ENCODE measurements at regions of chr11 and their contacts with region 1.

Region 1: GRCh38 chr11:64643256-64643881 is 52.3 kb downstream of the SLC22A12 start:
- DNase-seq: peak; percentile 61
- H3K4me3 ChIP-seq: peak overlapping the region; percentile 45
- H3K27ac ChIP-seq: no peak overlapping the region
- H3K4me1 ChIP-seq: peaks cover 11% of the 10 kb centered on the region
- H3K27me3 ChIP-seq: peaks cover 64% of the 10 kb centered on the region
- CTCF ChIP-seq: no peak

Region 2: GRCh38 chr11:64378335-64378880 is 265.0 kb before region 1 on chr11:
- CTCF ChIA-PET with region 1: no interaction called
- POLR2A ChIA-PET with region 1: no interaction called
- intact Hi-C with region 1: no loop called
- DNase-seq: no peak
- H3K4me3 ChIP-seq: no peak overlapping the region
- H3K27ac ChIP-seq: no peak overlapping the region
- H3K4me1 ChIP-seq: no peaks in the 10 kb centered on the region
- H3K27me3 ChIP-seq: no peaks in the 10 kb centered on the region
- CTCF ChIP-seq: no peak

Region 3: GRCh38 chr11:64778508-64779346 is 135.4 kb after region 1 on chr11 and contains the start of gene SF1:
- CTCF ChIA-PET with region 1: interaction called, 10 read pairs
- POLR2A ChIA-PET with region 1: no interaction called
- intact Hi-C with region 1: no loop called
- DNase-seq: peak; percentile 100
- H3K4me3 ChIP-seq: peak within 1 kb of the TSS; percentile 80
- H3K27ac ChIP-seq: peak within 1 kb of the TSS; percentile 99
- H3K4me1 ChIP-seq: peaks cover 21% of the 10 kb centered on the region
- H3K27me3 ChIP-seq: no peaks in the 10 kb centered on the region
- CTCF ChIP-seq: 0 out of 2 replicates have a peak, but pooled peaks have one; percentile 10
- total RNA-seq, gene SF1: 467 and 472 TPM in 2 replicates

Region 4: DNA sequence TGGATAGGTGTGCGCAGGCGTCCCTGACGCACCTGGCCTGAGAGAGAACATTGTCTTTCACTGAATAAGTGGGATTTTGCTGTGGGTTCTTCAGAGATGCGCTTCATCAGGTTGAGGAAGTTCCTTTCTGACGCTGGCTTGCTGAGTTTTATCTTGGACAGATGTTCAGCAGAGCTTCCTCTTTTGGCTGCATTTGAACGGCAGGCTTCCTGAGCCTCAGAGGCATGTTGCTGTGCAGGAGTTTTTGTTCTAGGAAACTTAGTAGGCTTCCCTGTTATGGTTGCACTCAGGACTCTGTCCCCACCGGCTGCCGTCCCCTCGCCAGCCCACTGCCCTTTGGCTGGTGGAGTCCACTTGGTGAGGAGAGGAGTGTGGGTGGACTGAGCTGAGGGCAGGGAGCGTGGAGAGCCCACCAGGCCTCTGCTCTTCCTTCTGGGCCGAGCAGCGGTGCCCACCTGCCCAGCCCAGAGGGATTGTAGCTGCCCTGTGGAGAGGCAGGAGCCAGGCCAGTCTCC is 760.3 kb after region 1 on chr11:
- CTCF ChIA-PET with region 1: no interaction called
- POLR2A ChIA-PET with region 1: no interaction called
- intact Hi-C with region 1: no loop called
- DNase-seq: no peak
- H3K4me3 ChIP-seq: no peak overlapping the region
- H3K27ac ChIP-seq: peak overlapping the region; percentile 19
- H3K4me1 ChIP-seq: no peaks in the 10 kb centered on the region
- H3K27me3 ChIP-seq: no peaks in the 10 kb centered on the region
- CTCF ChIP-seq: no peak